Ascending aorta (tissue), 2 donors: ENCODE measurements at regions of chr9 and their contacts with region 1.

Region 1: DNA sequence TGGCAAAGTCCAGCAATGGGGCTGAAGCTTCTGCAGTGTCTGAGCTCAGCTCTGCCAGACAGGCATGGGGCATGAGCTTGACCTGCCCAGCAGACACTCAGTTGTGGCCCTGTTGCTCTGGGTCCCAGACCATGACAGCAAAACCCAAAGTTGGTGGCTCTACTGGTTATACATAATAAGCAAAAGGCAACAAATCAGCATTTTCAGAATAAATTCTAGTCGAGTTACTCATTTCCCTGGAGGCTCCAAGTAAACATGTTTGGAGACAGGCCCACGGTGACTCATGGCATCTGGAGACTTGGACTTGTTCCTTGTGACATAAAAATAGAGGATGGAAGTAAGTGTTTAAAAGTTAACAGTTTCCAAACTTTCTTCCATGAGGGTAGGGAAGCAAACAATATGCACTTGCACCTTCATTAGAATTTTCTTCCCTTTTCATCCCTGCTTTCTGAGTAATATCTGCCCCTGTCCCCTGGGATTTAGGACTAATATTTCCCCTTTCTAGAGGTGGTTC is 60.2 kb upstream of the SLC2A8 start:
- DNase-seq: peak; percentile 54 to 96
- H3K4me3 ChIP-seq: peak overlapping the region in 1 of 2 donors; percentile 20
- H3K27ac ChIP-seq: peak overlapping the region; percentile 75 to 79
- H3K4me1 ChIP-seq: peaks cover 6 to 27% of the 10 kb centered on the region in 2 donors
- H3K27me3 ChIP-seq: no peaks in the 10 kb centered on the region
- CTCF ChIP-seq: no peak

Region 2: DNA sequence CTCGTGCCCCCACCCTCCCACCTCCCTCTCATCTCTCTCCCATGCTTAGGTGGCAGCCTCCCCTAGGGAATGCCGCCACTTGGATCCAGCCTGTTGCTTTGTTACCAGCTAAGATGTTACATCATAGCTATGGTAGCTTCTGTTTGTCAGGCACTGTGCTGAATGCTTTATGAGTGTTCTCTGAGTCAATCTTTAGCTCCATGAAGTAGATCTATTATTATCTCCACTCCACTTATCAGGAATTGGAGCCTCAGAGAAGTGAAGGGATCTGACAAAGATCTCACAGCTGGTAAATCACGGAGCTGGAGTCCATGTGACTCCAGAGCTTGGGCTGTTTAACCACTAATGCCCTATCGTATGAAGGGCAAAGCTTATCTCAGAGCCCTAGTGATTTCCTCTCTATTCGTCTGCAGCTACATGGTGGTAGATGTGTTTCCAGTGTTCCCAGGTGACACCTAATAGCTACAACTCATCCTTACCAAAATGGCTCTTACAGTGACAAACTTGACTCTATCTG is 18.1 kb before region 1 on chr9:
- intact Hi-C with region 1: loop called (anchors 2 kb)
- DNase-seq: peak in 1 of 2 donors; percentile 73
- H3K4me3 ChIP-seq: no peak overlapping the region
- H3K27ac ChIP-seq: peak overlapping the region; percentile 71 to 74
- H3K4me1 ChIP-seq: peaks cover 5 to 37% of the 10 kb centered on the region in 2 donors
- H3K27me3 ChIP-seq: no peaks in the 10 kb centered on the region
- CTCF ChIP-seq: no peak

Region 3: GRCh38 chr9:127360829-127361228 is 24.0 kb after region 1 on chr9:
- intact Hi-C with region 1: loop called (anchors 1 kb)
- DNase-seq: no peak
- H3K4me3 ChIP-seq: no peak overlapping the region
- H3K27ac ChIP-seq: peak overlapping the region; percentile 80 to 84
- H3K4me1 ChIP-seq: peaks cover 5 to 26% of the 10 kb centered on the region in 2 donors
- H3K27me3 ChIP-seq: no peaks in the 10 kb centered on the region
- CTCF ChIP-seq: peak in 1 of 3 experiments; percentile 12